ENCODE measurements at regions of chr5 and their contacts with region 1.

Region 1: DNA sequence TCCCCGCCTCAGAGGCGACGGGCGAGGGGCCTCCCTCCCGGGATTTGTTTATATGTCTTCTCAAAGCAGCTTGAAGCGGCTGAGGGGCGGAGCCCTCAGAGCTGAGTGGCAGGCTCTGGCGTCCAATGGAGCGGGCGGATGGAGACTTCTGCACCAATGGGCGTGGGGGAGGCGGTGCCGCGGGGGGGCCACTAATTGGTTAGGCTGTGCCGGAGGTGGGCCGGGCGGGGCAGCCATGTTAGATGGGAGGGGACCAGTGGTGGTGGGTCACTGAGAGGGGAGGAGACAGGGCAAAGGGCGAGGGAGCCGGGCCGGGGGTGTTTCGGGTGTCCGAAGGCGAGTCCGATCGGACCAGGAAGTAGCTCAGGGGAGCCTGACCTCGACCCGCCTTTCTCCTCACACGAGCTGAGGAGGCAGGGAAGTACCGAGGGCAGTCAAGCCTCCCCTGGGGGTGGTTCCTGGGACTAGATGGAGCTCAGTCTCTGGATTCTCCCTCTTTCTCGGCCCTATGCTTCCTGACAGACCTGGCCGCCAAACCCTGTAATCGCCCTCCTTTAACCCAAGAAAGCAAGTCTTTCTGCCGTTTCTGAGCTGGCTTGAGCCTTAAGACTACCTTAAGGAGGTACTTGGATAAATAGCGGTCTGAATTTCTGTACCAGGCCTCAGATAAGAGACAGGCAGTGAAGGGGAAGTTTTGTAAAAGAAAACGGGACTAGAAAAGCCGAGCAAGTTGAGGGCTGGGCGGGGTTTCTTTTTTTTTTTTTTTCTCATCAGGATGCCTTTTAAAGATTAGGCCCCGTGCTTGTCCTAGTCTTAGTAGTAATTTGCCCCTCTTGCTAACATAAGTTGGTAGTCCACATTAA is 1.1 kb downstream of the CREBRF start:
- DNase-seq: peak; percentile 100
- H3K4me3 Mint-ChIP-seq: peak overlapping the region; percentile 91
- H3K27ac Mint-ChIP-seq: peak overlapping the region; percentile 97
- H3K4me1 Mint-ChIP-seq: peaks cover 51% of the 10 kb centered on the region
- H3K27me3 Mint-ChIP-seq: no peaks in the 10 kb centered on the region

Region 2: DNA sequence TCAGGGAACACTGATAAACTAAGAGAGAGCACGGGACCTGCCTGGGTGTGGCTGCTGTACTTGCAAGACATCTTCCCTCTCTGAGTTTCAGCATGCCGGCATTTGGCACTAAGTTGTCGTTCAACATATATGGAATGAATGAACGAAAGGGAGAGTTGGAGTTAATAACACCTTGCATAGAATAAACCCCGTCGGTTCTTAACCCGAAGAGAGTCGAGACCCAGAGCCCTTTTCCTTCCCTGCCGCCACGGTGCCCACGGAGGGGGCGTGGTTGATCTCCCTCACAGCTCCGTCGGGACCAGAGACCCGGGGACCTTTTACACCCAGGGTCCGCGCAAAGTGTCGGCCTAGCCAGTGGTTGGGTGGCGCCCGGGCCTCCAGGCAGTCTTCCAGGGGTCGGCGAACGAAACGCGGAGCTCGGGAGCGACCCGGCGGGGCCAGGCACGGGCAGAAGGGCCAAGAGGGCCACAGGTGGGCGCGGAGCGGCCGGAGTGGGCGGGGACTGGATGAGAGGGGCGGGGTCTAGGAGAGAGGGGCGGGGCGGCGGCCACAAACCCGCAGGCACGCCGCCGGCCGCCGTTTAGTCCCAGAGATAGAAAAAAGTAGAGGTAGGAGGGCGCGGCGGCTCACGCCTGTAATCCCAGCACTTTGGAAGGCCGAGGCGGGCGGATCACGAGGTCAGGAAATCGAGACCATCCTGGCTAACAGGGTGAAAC is 98.8 kb before region 1 on chr5:
- CTCF ChIA-PET with region 1: interaction called, 6 read pairs
- intact Hi-C with region 1: loop called (anchors 1 kb)
- DNase-seq: peak; percentile 60
- H3K4me3 Mint-ChIP-seq: peak overlapping the region; percentile 93
- H3K27ac Mint-ChIP-seq: peak overlapping the region; percentile 86
- H3K4me1 Mint-ChIP-seq: peaks cover 16% of the 10 kb centered on the region
- H3K27me3 Mint-ChIP-seq: no peaks in the 10 kb centered on the region

Region 3: GRCh38 chr5:172994405-172994804 is 62.9 kb before region 1 on chr5:
- CTCF ChIA-PET with region 1: no interaction called
- intact Hi-C with region 1: no loop called
- DNase-seq: no peak
- H3K4me3 Mint-ChIP-seq: no peak overlapping the region
- H3K27ac Mint-ChIP-seq: no peak overlapping the region
- H3K4me1 Mint-ChIP-seq: peaks cover 52% of the 10 kb centered on the region
- H3K27me3 Mint-ChIP-seq: no peaks in the 10 kb centered on the region

Region 4: DNA sequence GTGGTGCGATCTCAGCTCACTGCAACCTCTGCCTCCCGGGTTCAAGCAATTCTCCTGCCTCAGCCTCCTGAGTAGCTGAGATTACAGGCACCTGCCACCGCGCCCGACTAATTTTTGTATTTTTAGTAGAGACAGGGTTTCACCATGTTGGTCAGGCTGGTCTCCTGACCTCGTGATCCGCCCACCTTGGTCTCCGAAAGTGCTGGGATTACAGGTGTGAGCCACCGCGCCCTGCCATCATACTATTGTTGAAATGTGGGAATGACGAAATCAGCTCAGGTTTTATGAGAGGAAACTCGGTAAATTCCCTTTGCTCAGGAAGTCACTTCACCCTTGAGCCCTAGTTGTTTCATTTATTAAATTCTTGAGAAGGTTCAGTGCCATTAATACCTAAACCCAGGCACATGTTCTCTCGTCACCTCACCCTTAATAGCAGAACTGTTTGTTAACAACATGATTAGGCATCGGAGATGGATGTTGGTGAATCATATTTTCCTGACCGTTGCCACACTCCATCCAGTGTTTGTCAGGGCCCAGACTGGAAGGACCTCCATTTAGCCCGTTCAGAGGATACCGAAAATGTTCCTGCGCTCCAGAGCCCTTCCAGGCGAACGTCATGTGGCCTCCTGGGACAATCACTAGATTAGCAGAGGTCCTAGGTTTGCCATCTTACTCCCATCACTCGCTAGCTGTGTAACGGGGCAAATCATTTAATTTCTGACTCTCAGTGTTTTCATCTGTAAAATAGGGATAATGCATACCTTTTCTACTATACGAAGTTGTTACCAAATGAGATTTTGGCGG is 21.2 kb before region 1 on chr5:
- CTCF ChIA-PET with region 1: interaction called, 4 read pairs
- intact Hi-C with region 1: loop called (anchors 1 kb)
- DNase-seq: peak; percentile 72
- H3K4me3 Mint-ChIP-seq: peak overlapping the region; percentile 74
- H3K27ac Mint-ChIP-seq: peak overlapping the region; percentile 97
- H3K4me1 Mint-ChIP-seq: peaks cover 63% of the 10 kb centered on the region
- H3K27me3 Mint-ChIP-seq: no peaks in the 10 kb centered on the region

Region 5: GRCh38 chr5:173075139-173075982 is 18.1 kb after region 1 on chr5:
- CTCF ChIA-PET with region 1: no interaction called
- intact Hi-C with region 1: no loop called
- DNase-seq: no peak
- H3K4me3 Mint-ChIP-seq: no peak overlapping the region
- H3K27ac Mint-ChIP-seq: no peak overlapping the region
- H3K4me1 Mint-ChIP-seq: peaks cover 56% of the 10 kb centered on the region
- H3K27me3 Mint-ChIP-seq: no peaks in the 10 kb centered on the region

Region 6: DNA sequence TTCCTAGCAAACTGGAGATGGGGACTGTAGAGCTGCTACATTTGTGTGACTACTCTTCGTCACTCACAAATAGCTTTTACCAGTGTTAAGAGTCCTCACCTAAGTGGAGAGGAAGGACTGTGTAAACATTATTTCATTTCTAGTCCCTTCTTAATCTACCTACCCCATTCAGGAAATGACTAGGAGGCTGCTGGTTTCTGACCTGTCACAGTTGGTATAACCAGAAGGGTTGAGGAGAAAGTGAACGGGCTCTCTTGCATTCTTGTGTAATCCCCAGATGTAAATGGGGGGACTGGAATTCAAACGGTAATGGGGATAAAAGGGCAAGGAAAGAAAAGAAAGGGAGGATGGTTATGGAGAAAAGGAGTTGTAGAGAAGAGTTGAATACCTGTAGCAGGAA is 51.6 kb after region 1 on chr5:
- CTCF ChIA-PET with region 1: no interaction called
- intact Hi-C with region 1: no loop called
- DNase-seq: no peak
- H3K4me3 Mint-ChIP-seq: no peak overlapping the region
- H3K27ac Mint-ChIP-seq: peak overlapping the region; percentile 43
- H3K4me1 Mint-ChIP-seq: peaks cover 15% of the 10 kb centered on the region
- H3K27me3 Mint-ChIP-seq: no peaks in the 10 kb centered on the region

Region 7: GRCh38 chr5:173238312-173239232 is 181.3 kb after region 1 on chr5:
- CTCF ChIA-PET with region 1: no interaction called
- intact Hi-C with region 1: no loop called
- DNase-seq: no peak
- H3K4me3 Mint-ChIP-seq: peak overlapping the region; percentile 47
- H3K27ac Mint-ChIP-seq: no peak overlapping the region
- H3K4me1 Mint-ChIP-seq: peaks cover 45% of the 10 kb centered on the region
- H3K27me3 Mint-ChIP-seq: peaks cover 85% of the 10 kb centered on the region